ENCODE measurements at regions of chr2 and their contacts with region 1.

Region 1: DNA sequence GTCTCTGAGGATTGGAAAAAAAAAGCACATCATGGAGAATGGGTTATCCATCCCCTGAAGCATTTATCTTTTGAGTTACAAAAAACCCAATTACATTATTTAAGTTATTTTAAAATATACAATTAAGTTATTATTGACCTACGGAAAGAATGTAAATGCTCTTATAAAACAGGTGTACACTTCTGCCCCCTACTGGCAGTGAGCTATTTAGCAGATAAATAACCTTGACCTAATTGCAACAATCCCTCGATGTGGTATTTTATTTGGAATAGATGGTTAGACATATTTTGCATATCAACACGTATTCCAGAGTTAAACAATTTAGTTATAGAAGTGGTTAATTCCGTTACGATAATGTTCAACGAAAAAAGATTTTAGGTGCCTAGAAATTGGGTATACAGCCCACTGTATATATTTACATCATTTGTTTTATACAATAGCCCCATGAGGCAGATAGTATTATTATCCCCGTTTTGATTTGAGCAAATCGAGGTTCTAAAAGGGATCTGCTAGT is 9.1 kb upstream of the DAW1 start:
- H3K4me3 ChIP-seq: no peak overlapping the region
- H3K27ac ChIP-seq: no peak overlapping the region
- H3K4me1 ChIP-seq: no peaks in the 10 kb centered on the region
- CTCF ChIP-seq: no peak

Region 2: GRCh38 chr2:227627769-227628168 is 234.5 kb before region 1 on chr2:
- CTCF ChIA-PET with region 1: no interaction called
- POLR2A ChIA-PET with region 1: no interaction called
- H3K4me3 ChIP-seq: no peak overlapping the region
- H3K27ac ChIP-seq: no peak overlapping the region
- H3K4me1 ChIP-seq: no peaks in the 10 kb centered on the region
- CTCF ChIP-seq: no peak

Region 3: GRCh38 chr2:227818675-227819397 is 43.4 kb before region 1 on chr2:
- CTCF ChIA-PET with region 1: interaction called, 15 read pairs
- POLR2A ChIA-PET with region 1: no interaction called
- H3K4me3 ChIP-seq: no peak overlapping the region
- H3K27ac ChIP-seq: no peak overlapping the region
- H3K4me1 ChIP-seq: no peaks in the 10 kb centered on the region; the same call in 1 of the 2 replicates
- CTCF ChIP-seq: no peak

Region 4: DNA sequence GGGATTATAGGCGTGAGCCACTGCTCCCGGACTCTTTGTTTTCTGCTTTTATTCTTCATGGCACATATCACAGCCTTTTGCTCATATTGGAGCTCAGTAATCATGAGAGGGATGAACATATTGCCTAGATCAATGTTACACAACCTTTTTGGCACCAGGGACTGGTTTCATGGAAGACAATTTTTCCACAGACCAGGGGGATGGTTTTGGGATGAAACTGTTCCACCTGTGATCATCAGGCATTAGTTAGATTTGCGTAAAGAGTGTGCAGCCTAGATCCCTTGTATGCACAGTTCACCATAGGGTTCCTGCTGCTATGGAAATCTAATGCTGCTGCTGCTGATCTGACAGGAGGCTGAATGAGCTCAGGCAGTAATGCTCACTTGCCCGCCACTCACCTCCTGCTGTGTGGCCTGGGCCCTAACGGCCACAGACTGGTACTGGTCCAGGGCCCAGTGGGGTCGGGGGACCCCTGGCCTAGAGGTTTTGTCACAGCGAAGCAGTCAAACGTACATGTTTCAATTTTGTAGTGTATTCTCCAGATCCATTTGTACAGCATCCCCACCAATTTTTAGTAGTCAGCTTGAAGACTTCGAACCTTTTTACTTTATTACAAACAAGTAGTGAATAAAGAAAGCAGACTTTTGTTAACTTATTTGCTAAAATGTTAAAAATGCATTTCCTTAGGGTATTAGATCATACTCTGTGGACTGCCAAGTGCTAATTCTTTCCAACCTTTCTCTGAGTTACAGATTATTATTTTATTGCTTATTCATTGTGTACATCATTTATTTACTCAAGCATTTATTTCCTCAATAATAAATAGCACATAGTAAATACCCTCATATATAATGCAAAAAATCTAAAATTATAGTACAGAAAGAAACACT is 15.4 kb after region 1 on chr2:
- CTCF ChIA-PET with region 1: interaction called, 49 read pairs
- POLR2A ChIA-PET with region 1: no interaction called
- H3K4me3 ChIP-seq: no peak overlapping the region
- H3K27ac ChIP-seq: no peak overlapping the region
- H3K4me1 ChIP-seq: peaks cover 7% of the 10 kb centered on the region; the same call in 1 of the 2 replicates
- CTCF ChIP-seq: no peak

Region 5: DNA sequence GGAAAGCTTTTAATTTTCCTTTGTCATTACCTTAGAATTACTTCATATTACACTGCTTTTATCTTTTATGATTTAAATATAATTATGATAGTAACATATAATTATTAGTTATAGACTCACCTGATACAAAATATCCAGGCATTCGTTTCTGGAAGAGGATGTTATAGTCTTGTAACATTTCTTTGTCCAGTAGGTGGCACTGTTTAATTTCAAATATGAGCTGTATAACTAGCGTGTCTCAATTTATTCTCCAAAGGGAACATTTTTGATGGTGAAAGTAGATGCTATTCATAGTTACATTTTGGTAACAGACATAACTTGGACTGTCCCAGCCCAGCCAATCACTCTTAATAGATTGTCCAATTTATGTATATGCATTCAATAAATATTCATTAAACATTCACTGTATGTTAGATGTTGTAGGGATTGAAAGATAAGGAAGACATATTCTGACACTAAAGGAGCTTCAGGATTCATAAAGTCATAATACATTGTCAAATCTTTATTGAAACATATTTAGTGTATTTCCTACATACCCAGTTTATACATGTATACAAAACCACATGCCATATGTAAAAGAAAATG is 28.3 kb after region 1 on chr2:
- CTCF ChIA-PET with region 1: interaction called, 10 read pairs
- POLR2A ChIA-PET with region 1: no interaction called
- H3K4me3 ChIP-seq: no peak overlapping the region
- H3K27ac ChIP-seq: no peak overlapping the region
- H3K4me1 ChIP-seq: no peaks in the 10 kb centered on the region
- CTCF ChIP-seq: no peak